Activated T-helper 2 cell treated with anti-CD3 and anti-CD28 coated beads, Interferon-gamma antibody, Interleukin-2, Interleukin-4, amounts not matched to agents 10 μg/mL and 5 μg/mL and 100 μg/mL, durations not matched to agents 14 hours and 24 hours and 36 hours (primary cell): ENCODE measurements at regions of chr5 and their contacts with region 1.

Region 1: GRCh38 chr5:177113566-177114424 is 19.8 kb upstream of the NSD1 start:
- DNase-seq: peak; percentile 72
- H3K4me3 Mint-ChIP-seq: no peak overlapping the region
- H3K27ac Mint-ChIP-seq: peak overlapping the region; percentile 34
- H3K4me1 Mint-ChIP-seq: peaks cover 14% of the 10 kb centered on the region
- H3K27me3 Mint-ChIP-seq: peaks cover 5% of the 10 kb centered on the region

Region 2: DNA sequence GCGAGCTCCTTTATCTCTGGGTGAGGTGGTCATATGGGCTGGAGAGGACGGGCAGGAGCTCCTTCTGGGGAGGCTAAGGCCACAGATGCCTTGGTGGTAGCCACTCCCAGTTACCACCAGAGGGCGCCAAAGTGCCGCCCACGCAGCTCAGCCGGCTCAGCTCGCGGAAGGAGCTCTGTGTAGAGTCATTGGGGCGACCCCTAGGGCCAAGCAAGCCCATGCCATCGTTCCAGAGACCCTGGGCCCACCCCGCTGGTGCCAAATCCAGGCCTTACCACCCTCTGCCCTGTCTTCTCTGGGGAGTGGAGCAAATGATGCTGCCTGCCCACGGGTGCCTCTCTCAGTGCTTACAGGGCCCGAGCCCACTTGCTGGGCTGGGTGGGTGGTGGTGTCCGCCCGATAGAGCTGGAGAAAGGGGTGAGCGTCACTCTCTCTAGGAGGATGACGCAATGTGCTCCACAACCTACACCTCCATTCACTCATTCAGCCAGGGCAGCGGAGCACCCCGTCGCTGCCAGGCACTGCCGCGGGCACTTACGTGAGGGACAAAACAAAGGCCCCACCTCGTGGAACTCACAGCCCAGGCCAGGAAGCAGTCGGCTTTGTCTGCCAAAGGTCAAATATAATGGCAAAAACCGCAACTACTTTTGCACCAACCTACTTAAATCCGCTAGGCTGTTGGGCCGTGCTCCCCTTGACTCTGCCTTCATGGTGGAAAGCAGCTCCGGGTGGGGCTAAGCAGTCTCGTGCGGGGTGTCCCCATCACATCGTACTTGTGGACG is 452.7 kb before region 1 on chr5:
- intact Hi-C with region 1: loop called (anchors 5 kb)
- DNase-seq: peak; percentile 66
- H3K4me3 Mint-ChIP-seq: no peak overlapping the region
- H3K27ac Mint-ChIP-seq: no peak overlapping the region
- H3K4me1 Mint-ChIP-seq: peaks cover 19% of the 10 kb centered on the region
- H3K27me3 Mint-ChIP-seq: peaks cover 15% of the 10 kb centered on the region

Region 3: GRCh38 chr5:177071666-177072385 is 42.0 kb before region 1 on chr5:
- intact Hi-C with region 1: loop called (anchors 5 kb)
- DNase-seq: peak; percentile 45
- H3K4me3 Mint-ChIP-seq: no peak overlapping the region
- H3K27ac Mint-ChIP-seq: no peak overlapping the region
- H3K4me1 Mint-ChIP-seq: peaks cover 2% of the 10 kb centered on the region
- H3K27me3 Mint-ChIP-seq: no peaks in the 10 kb centered on the region

Region 4: GRCh38 chr5:177133091-177133852 is 19.5 kb after region 1 on chr5 and contains the start of gene NSD1:
- intact Hi-C with region 1: loop called (anchors 1 kb)
- DNase-seq: peak; percentile 91
- H3K4me3 Mint-ChIP-seq: peak within 1 kb of the TSS; percentile 88
- H3K27ac Mint-ChIP-seq: peak within 1 kb of the TSS; percentile 83
- H3K4me1 Mint-ChIP-seq: peaks cover 36% of the 10 kb centered on the region
- H3K27me3 Mint-ChIP-seq: no peaks in the 10 kb centered on the region
- total RNA-seq, gene NSD1: 100.0 and 103 TPM in 2 replicates

Region 5: GRCh38 chr5:177169271-177169670 is 55.5 kb after region 1 on chr5:
- intact Hi-C with region 1: loop called (anchors 5 kb)
- DNase-seq: no peak
- H3K4me3 Mint-ChIP-seq: no peak overlapping the region
- H3K27ac Mint-ChIP-seq: no peak overlapping the region
- H3K4me1 Mint-ChIP-seq: peaks cover 10% of the 10 kb centered on the region
- H3K27me3 Mint-ChIP-seq: no peaks in the 10 kb centered on the region